Astrocyte of the cerebellum (primary cell): ENCODE measurements at regions of chr6 and their contacts with region 1.

Region 1: GRCh38 chr6:26097268-26097875 is 10.1 kb downstream of the HFE start:
- DNase-seq: peak; percentile 48
- H3K4me3 ChIP-seq: no peak overlapping the region
- CTCF ChIP-seq: peak; percentile 59

Region 2: DNA sequence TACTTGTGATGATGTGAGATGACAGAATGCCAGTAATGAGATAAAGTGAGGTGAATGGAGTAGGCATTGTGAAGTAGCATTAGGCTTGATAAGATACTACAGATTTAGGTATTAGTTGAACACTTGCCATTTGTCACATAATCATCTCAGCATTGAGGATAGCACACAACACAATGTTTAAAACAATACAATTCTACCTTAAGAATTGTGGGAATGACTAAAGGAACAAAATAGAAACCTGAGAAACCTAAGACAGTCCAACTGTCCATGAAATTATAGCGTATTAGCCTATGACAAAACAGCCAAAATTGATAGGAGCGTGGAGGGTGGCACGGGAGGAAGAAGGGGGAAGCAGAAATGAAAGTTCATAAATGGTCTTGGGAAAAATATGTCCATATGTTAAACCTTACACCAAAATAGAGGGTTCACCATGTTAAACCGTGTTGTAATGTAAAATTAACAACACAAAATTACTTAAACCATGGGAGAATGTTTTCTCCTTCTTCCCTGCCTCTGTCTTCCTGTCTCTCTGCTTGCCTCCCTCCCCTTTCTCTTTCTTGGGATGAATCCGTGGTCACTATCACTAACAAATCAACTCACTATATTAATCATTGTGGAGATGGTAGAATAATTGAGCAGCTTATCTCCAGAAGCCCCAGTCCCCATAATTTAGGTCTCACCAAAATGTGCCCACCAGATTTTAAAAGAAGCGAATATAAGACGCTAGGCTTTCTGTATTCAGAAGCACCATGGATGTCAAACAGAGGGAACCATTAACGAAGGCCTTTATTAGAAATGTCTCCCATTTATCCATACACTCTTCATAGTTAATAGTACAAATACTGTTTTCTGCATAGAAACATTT is 43.1 kb before region 1 on chr6:
- in situ Hi-C with region 1: no loop called
- DNase-seq: no peak
- H3K4me3 ChIP-seq: peak overlapping the region; percentile 78
- CTCF ChIP-seq: no peak

Region 3: GRCh38 chr6:26064619-26065257 is 32.6 kb before region 1 on chr6:
- in situ Hi-C with region 1: loop called (anchors 5 kb)
- DNase-seq: no peak
- H3K4me3 ChIP-seq: no peak overlapping the region
- CTCF ChIP-seq: peak; percentile 65

Region 4: DNA sequence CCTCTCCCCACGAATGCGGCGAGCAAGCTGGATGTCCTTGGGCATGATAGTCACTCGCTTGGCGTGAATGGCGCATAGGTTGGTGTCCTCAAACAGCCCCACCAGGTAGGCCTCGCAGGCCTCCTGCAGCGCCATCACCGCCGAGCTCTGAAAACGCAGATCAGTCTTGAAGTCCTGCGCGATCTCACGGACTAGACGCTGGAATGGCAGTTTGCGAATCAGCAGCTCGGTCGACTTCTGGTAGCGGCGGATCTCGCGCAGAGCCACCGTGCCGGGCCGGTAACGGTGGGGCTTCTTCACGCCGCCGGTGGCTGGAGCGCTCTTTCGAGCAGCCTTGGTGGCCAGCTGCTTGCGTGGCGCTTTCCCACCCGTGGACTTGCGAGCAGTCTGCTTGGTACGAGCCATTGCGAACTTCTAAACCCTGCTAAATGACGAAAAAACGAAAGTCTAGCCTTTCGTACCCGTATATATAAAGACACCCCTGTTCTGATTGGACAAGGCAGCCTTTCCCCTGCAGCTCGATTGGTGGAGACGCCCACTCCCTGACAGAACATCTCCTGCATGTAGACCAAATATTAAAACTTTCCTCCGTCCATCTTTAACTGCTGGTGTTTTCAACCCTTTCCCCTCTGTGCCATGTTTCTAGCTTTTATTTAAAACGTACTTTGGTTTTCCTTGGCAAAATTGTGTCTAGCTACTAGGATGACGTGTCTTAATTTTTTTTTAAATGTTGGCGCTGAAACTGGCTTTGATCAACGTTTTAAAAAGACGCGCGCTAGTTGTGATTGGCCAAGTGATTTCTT is 99.7 kb after region 1 on chr6:
- in situ Hi-C with region 1: loop called (anchors 5 kb)
- DNase-seq: peak; percentile 85
- H3K4me3 ChIP-seq: peak overlapping the region; percentile 79
- CTCF ChIP-seq: no peak